Activated CD4-positive, alpha-beta memory T cell treated with anti-CD3 and anti-CD28 coated beads for 36 hours (primary cell): ENCODE measurements at regions of chr11 and their contacts with region 1.

Region 1: GRCh38 chr11:109416601-109417000 is 5.4 kb upstream of the C11orf87 start:
- DNase-seq: no peak
- H3K4me3 Mint-ChIP-seq: no peak overlapping the region
- H3K27ac Mint-ChIP-seq: no peak overlapping the region
- H3K4me1 Mint-ChIP-seq: no peaks in the 10 kb centered on the region
- H3K27me3 Mint-ChIP-seq: peaks cover 7% of the 10 kb centered on the region

Region 2: GRCh38 chr11:109298865-109299264 is 117.7 kb before region 1 on chr11:
- CTCF ChIA-PET with region 1: no interaction called
- POLR2A ChIA-PET with region 1: no interaction called
- intact Hi-C with region 1: no loop called
- DNase-seq: no peak
- H3K4me3 Mint-ChIP-seq: no peak overlapping the region
- H3K27ac Mint-ChIP-seq: no peak overlapping the region
- H3K4me1 Mint-ChIP-seq: no peaks in the 10 kb centered on the region
- H3K27me3 Mint-ChIP-seq: no peaks in the 10 kb centered on the region

Region 3: DNA sequence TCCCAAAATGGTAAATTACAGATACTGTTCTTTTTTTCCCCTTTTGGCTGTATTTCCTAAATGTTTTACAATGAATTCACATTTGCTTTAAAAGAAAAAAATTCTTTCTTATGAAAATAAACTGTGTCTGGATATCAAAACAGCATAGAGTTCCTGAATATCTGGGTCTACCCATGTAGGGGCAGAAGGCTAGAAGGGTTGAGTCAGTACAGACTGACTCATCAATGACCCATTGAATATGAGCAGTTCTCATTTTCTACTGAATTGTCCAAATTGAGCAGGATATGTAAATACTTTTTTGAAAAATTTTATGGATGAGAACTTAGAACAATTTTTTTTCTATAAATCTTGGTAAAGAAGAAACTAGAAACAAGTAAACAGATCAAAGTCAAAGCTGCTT is 10.9 kb before region 1 on chr11:
- CTCF ChIA-PET with region 1: no interaction called
- POLR2A ChIA-PET with region 1: no interaction called
- intact Hi-C with region 1: no loop called
- DNase-seq: no peak
- H3K4me3 Mint-ChIP-seq: no peak overlapping the region
- H3K27ac Mint-ChIP-seq: no peak overlapping the region
- H3K4me1 Mint-ChIP-seq: no peaks in the 10 kb centered on the region
- H3K27me3 Mint-ChIP-seq: no peaks in the 10 kb centered on the region

Region 4: DNA sequence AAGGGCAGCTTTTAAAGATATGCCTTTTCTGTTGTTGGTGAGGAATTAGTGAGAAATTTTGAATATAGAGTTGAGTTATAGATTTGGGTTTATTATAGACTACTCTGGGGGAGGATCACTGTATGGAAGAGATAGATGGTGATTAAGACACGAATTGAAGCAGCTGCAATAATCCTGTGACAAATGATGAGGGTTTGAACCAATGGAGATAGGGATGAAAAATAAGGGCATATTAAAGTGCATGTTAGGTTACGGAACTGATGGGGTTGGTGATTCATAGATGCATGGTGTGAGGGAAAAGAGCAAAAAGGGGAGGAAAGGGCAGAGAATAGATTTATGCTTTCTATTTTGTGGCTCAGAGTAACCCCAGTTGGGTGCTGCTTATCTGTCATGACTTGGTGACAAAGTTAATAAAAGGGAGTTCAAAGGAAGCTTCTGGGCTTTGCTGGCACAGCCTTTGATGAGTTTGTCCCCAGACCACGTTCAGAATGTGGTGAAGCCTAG is 17.2 kb after region 1 on chr11:
- CTCF ChIA-PET with region 1: no interaction called
- POLR2A ChIA-PET with region 1: no interaction called
- intact Hi-C with region 1: loop called (anchors 1 kb)
- DNase-seq: no peak
- H3K4me3 Mint-ChIP-seq: no peak overlapping the region
- H3K27ac Mint-ChIP-seq: no peak overlapping the region
- H3K4me1 Mint-ChIP-seq: no peaks in the 10 kb centered on the region
- H3K27me3 Mint-ChIP-seq: no peaks in the 10 kb centered on the region

Region 5: GRCh38 chr11:109658190-109658589 is 241.6 kb after region 1 on chr11:
- CTCF ChIA-PET with region 1: no interaction called
- POLR2A ChIA-PET with region 1: no interaction called
- intact Hi-C with region 1: no loop called
- DNase-seq: no peak
- H3K4me3 Mint-ChIP-seq: no peak overlapping the region
- H3K27ac Mint-ChIP-seq: no peak overlapping the region
- H3K4me1 Mint-ChIP-seq: no peaks in the 10 kb centered on the region
- H3K27me3 Mint-ChIP-seq: no peaks in the 10 kb centered on the region